ENCODE measurements at regions of chr9 and their contacts with region 1.

Region 1: GRCh38 chr9:117247266-117247665 is 167.6 kb downstream of the ASTN2 start:
- DNase-seq: peak in 2 of 6 donors; percentile 3 to 16
- ATAC-seq: peak in 3 of 4 donors; percentile 74 to 84 (median 81)
- H3K4me3 ChIP-seq: no peak overlapping the region
- H3K27ac ChIP-seq: no peak overlapping the region
- H3K4me1 ChIP-seq: no peaks in the 10 kb centered on the region
- H3K27me3 ChIP-seq: no peaks in the 10 kb centered on the region
- CTCF ChIP-seq: peak in 3 of 4 donors; percentile 20 to 29 (median 25)

Region 2: DNA sequence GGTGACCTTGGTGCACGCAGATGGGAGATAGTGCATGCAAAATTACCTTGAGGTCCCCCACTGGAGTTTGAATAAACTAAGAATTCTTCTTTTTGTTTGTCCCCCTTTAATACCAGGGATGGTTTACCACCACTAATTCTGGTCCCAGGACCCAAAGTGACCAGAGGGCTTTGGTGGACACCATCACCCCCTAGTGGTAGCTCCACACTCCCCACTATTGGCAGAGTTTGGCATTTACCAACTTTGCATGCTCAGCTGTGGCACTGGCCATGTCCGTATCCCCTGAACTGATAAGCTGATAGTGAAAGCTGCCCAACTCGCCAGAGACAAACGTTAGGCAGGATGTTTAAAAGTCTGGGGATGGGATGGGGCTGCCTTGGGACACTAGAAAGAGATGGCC is 164.3 kb after region 1 on chr9:
- intact Hi-C with region 1: loop called in 1 of 3 experiments (anchors 10 kb)
- DNase-seq: peak; percentile 64 to 80 (median 68)
- ATAC-seq: peak; percentile 81 to 87 (median 86)
- H3K4me3 ChIP-seq: no peak overlapping the region
- H3K27ac ChIP-seq: no peak overlapping the region
- H3K4me1 ChIP-seq: peaks cover 0 to 4% (median 4%) of the 10 kb centered on the region in 3 donors
- H3K27me3 ChIP-seq: no peaks in the 10 kb centered on the region
- CTCF ChIP-seq: peak; percentile 67 to 77 (median 69)

Measured in pancreas (tissue), 10 donors.